ENCODE measurements at regions of chr2 and their contacts with region 1.

Region 1: DNA sequence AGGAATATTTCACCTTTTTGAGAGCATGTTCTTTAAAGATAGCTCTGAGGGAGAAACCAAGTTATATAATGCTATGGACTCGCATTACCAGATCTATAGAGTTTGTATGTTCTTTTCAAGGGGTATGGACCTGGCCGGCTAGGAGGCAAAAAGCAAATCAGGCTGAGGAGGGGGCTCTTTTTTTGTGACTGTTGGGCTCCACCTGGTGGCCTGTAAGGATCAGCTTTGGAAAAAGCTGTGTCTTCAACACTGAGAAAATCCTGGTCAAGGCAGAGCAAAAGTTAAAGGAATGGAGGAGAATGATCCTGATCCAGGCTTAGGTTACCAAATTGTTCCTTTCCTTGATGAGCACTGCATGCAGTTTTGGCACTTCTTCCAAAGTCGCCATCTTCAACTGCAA is 180.5 kb downstream of the DIS3L2 start:
- DNase-seq: no peak
- H3K4me3 ChIP-seq: no peak overlapping the region
- H3K27ac ChIP-seq: no peak overlapping the region
- H3K4me1 ChIP-seq: no peaks in the 10 kb centered on the region
- H3K27me3 ChIP-seq: no peaks in the 10 kb centered on the region
- CTCF ChIP-seq: peak; percentile 20 to 72 (median 55)
- POLR2A ChIP-seq: no peak

Region 2: DNA sequence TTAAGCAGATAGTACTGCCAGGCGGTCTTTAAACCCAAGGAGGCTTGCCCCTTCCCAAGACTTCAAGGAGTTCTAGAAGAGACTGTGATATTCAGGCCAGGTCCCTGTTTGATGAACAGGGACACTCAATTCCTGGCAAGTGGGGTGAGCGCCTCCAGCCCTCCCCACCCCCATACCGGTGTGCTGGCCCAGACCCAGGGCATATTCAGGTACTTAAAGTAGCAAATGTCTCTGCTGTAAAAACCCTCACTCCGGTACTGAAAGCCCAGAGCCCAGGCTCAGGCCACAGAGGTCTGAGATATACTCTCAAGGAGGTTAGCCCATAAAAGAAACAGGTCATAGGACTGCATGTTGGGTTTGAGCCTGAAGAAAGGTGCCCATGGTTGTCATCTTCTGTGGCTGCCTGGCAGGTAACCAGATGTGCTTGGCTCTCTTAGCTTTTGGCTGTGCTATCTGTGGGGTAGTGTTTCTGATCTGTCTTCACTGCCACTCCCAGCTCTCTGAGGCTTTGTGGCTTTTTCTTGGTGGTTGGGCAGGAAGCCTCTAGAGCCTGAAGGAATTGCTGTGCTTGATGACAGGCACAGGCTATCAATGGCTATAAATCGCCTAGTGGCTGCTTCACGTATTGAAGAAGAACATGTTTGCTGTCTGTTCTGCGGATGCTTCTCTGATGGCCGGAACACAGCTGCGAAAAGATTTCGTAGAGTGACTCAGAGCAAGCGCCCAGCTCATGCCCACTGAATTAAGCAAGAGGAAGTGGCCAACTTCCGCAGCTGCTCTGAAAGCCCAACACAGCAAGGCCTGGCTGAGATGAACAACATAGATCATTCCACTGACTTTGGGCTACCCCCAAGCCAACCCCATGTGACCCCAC is 173.2 kb after region 1 on chr2:
- intact Hi-C with region 1: loop called (anchors 10 kb)
- DNase-seq: peak; percentile 72
- H3K4me3 ChIP-seq: no peak overlapping the region
- H3K27ac ChIP-seq: peak overlapping the region; percentile 33 to 55
- H3K4me1 ChIP-seq: peaks cover 26% of the 10 kb centered on the region
- H3K27me3 ChIP-seq: no peaks in the 10 kb centered on the region
- CTCF ChIP-seq: peak in 2 of 4 experiments; percentile 24 to 33
- POLR2A ChIP-seq: no peak